Breast epithelium (tissue), 4 donors: ENCODE measurements at regions of chr5 and their contacts with region 1.

Region 1: DNA sequence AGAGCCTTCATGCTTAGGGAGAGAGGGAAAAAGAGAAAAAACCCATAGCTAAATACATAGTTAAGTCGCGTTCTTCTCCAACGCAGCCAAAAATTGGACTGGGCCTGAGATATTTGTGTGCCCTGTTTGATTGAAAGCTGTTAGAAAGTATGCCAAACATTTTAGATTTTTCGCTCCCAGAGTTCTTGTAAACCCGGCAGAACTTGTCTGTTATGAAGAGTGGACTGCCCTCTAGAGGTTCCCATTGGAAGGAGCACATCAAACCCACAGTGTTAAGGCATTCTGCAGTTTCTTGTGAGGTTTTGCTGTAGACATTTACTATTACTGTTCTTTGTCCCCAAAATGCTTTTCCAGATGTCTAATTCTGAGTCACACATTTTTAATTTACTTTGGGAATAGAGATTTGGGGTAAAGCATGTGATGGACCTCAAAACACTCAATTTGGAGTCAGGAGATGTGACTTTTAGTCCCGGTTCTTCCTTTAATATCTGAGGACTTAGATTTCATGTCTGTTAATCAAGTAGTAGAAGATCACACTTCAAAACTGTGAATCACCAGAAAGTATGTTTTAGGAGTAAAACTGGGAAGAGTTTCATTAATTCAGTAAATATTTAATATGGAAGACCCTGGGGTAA is 96.6 kb downstream of the PCSK1 start:
- DNase-seq: peak in 1 of 2 donors; percentile 78
- H3K4me3 ChIP-seq: no peak overlapping the region
- H3K27ac ChIP-seq: peak overlapping the region; percentile 7 to 45
- H3K4me1 ChIP-seq: peaks cover 5 to 9% of the 10 kb centered on the region in 2 donors
- H3K27me3 ChIP-seq: no peaks in the 10 kb centered on the region
- CTCF ChIP-seq: peak; percentile 70 to 83 (median 73)
- POLR2A ChIP-seq: no peak

Region 2: GRCh38 chr5:96595300-96596090 is 259.0 kb after region 1 on chr5:
- intact Hi-C with region 1: loop called (anchors 10 kb)
- DNase-seq: no peak
- H3K4me3 ChIP-seq: no peak overlapping the region
- H3K27ac ChIP-seq: no peak overlapping the region
- H3K4me1 ChIP-seq: no peaks in the 10 kb centered on the region
- H3K27me3 ChIP-seq: no peaks in the 10 kb centered on the region
- CTCF ChIP-seq: no peak
- POLR2A ChIP-seq: no peak

Region 3: DNA sequence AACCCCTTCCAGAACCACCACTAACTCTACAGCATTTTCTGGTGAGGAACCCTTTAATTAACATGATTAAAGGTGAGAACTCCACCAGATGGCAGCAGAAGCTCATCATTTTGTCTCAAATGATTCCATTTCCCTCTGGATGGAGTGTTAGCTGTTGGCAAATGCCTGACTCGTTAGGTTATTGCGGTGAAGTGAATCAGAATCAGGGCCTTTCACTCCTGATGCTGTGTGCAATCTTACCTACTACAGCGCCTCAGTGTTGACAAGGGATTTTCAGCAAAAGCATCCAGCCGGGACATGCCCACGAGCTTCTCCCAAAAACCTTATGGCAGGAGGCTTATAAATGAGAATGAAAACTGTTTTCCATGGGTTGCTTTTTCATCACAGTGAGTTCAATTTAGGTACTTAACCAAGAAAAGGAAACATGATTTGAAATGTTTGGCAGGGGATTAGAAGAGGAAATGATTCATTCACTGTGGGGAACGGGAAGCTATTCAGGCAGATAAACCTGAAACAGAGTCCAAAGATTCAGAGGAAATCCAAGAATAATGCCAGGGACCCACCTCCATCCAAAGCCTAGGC is 277.7 kb after region 1 on chr5:
- intact Hi-C with region 1: loop called (anchors 5 kb)
- DNase-seq: peak in 1 of 2 donors; percentile 45
- H3K4me3 ChIP-seq: no peak overlapping the region
- H3K27ac ChIP-seq: peak overlapping the region; percentile 50 to 61
- H3K4me1 ChIP-seq: no peaks in the 10 kb centered on the region
- H3K27me3 ChIP-seq: no peaks in the 10 kb centered on the region
- CTCF ChIP-seq: peak in 2 of 3 donors; percentile 69 to 77
- POLR2A ChIP-seq: no peak